Adrenal gland (tissue), 19 donors: ENCODE measurements at regions of chr12 and their contacts with region 1.

Region 1: DNA sequence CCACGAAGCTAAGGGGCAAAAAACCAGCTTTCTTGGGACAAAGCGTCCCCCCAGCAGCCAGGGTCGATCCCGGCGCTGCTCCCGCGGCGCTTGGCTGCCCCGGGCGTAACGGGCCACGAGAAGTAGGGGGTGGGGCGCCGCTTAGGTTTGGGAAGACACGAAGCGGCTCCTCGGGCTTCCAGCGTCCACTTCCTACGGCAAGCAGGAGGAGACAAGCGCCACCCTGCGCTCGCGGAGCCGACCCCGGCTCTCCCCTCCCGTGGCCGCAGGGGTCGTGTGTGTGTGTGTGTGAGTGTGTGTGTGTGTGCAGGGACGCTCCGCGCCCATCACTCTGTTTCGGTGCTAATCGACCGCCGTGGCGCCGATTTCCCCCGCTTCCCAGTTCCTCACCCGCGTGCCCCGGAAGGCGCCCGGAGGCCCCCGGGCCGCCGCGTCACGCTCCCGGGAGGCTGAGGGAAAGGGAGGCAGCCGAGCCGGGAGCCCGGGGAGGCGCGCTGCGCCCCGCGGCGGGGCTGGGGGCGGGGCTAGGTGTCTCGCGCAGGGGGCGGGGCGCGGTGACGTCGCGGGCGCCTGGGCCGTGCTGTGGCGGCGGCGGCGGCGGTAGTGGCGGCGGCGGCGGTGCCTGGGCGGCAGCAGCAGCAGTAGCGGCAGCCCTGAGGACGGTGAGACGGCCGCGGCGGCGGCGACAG is at the start of gene ERC1:
- DNase-seq: peak; percentile 91 to 93 (median 92)
- H3K4me3 ChIP-seq: peak within 1 kb of the TSS; percentile 46 to 84 (median 66)
- H3K27ac ChIP-seq: peak within 1 kb of the TSS; percentile 91 to 100 (median 99)
- H3K4me1 ChIP-seq: peaks cover 15 to 52% of the 10 kb centered on the region in 2 donors
- H3K27me3 ChIP-seq: no peaks in the 10 kb centered on the region
- CTCF ChIP-seq: peak in 2 of 6 experiments; percentile 6 to 12
- POLR2A ChIP-seq: peak; percentile 52 to 92
- total RNA-seq, gene ERC1: 30.0 to 79.5 (median 54.5) TPM

Region 2: DNA sequence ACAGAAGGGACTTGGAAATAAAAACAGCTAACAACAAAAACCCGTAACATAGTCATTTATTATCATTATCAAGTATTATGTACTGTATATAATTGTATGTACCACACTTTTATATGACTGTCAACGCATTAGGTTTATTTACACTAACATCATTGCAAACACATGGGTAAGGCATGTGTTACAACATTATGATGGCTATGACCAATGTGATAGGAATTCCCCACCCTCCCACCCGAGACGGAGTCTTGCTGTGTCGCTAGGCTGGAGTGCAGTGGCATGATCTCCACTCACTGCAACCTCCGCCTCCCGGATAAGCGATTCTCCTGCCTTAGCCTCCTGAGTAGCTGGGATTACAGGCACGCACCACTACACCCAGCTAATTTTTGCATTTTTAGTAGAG is 82.8 kb after region 1 on chr12:
- intact Hi-C with region 1: loop called in 1 of 2 experiments (anchors 10 kb)
- DNase-seq: no peak
- H3K4me3 ChIP-seq: no peak overlapping the region
- H3K27ac ChIP-seq: no peak overlapping the region
- H3K4me1 ChIP-seq: peaks cover 0 to 9% of the 10 kb centered on the region in 2 donors
- H3K27me3 ChIP-seq: no peaks in the 10 kb centered on the region
- CTCF ChIP-seq: no peak
- POLR2A ChIP-seq: no peak

Region 3: GRCh38 chr12:1122786-1123185 is 132.0 kb after region 1 on chr12:
- intact Hi-C with region 1: no loop called
- DNase-seq: no peak
- H3K4me3 ChIP-seq: no peak overlapping the region
- H3K27ac ChIP-seq: no peak overlapping the region
- H3K4me1 ChIP-seq: no peaks in the 10 kb centered on the region
- H3K27me3 ChIP-seq: no peaks in the 10 kb centered on the region
- CTCF ChIP-seq: no peak
- POLR2A ChIP-seq: no peak